ENCODE measurements at regions of chr5 and their contacts with region 1.

Region 1: GRCh38 chr5:154196955-154197652 is 6.6 kb downstream of the GALNT10 start:
- DNase-seq: no peak
- H3K4me3 ChIP-seq: no peak overlapping the region
- H3K27ac ChIP-seq: no peak overlapping the region
- H3K4me1 ChIP-seq: peaks cover 0 to 19% (median 12%) of the 10 kb centered on the region in 4 experiments; a peak in 5 of 7 replicates
- H3K27me3 ChIP-seq: peaks cover 1 to 8% (median 5%) of the 10 kb centered on the region in 4 experiments; a peak in 5 of 7 replicates
- CTCF ChIP-seq: peak in 1 of 3 experiments; percentile 27; a peak in 1 of 4 replicates
- EP300 ChIP-seq: no peak
- POLR2A ChIP-seq: no peak
- RAD21 ChIP-seq: peak; percentile 26 to 40; a peak in 3 of 4 replicates

Region 2: GRCh38 chr5:153974131-153974812 is 222.8 kb before region 1 on chr5:
- CTCF ChIA-PET with region 1: interaction called, 11 read pairs
- POLR2A ChIA-PET with region 1: no interaction called
- DNase-seq: peak in 1 of 2 experiments; percentile 60
- H3K4me3 ChIP-seq: no peak overlapping the region
- H3K27ac ChIP-seq: no peak overlapping the region
- H3K4me1 ChIP-seq: no peaks in the 10 kb centered on the region
- H3K27me3 ChIP-seq: peaks cover 0 to 2% (median 0%) of the 10 kb centered on the region in 4 experiments; a peak in 1 of 7 replicates
- CTCF ChIP-seq: peak in 2 of 3 experiments; percentile 71 to 74; a peak in 3 of 4 replicates
- EP300 ChIP-seq: no peak
- POLR2A ChIP-seq: no peak
- RAD21 ChIP-seq: peak; percentile 93 to 96

Region 3: DNA sequence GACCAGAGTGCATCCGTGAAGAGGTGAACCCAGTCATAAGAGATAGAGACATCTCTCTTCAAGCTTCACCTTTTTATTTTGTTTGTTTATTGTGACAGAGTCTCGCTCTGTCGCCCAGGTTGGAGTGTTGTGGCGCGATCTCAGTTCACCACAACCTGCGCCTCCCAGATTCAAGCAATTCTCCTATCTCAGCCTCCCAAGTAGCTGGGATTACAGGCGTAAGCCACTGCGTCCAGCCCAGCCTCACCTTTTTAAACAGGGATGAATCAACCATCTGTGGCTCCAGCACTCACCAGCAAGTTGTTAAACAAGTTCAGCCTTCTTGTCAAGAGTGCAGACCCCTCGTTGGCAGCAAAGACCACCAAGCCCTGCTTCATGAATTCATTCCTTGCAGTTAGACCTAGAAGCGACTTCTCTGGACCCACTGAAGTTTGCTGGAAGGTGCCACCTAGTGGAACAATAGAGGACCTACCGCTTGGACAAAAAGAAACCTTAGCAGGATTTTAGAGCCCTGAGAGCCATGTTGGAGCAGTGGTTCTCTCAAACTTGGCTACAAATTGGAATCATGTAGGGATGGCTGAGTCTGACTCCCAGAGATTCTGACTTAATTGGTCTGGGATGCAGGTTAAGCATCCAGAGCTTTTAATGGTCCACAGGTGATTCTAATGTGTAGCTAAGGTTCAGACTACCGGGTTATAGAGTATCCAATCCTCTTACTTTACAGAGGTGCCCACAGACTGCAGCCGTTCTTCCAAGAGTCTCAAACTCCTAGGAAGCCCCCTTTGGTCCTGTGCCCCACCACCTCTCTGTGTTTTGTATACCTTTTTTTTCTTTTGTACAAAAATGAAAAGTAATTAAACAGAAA is 17.0 kb before region 1 on chr5:
- CTCF ChIA-PET with region 1: interaction called, 25 read pairs
- POLR2A ChIA-PET with region 1: interaction called, 8 read pairs
- DNase-seq: no peak
- H3K4me3 ChIP-seq: no peak overlapping the region
- H3K27ac ChIP-seq: no peak overlapping the region
- H3K4me1 ChIP-seq: no peaks in the 10 kb centered on the region; a peak in 1 of 7 replicates
- H3K27me3 ChIP-seq: peaks cover 0 to 3% (median 0%) of the 10 kb centered on the region in 4 experiments; a peak in 1 of 7 replicates
- CTCF ChIP-seq: peak; percentile 26 to 84 (median 84)
- EP300 ChIP-seq: no peak
- POLR2A ChIP-seq: no peak
- RAD21 ChIP-seq: peak; percentile 85 to 90

Region 4: DNA sequence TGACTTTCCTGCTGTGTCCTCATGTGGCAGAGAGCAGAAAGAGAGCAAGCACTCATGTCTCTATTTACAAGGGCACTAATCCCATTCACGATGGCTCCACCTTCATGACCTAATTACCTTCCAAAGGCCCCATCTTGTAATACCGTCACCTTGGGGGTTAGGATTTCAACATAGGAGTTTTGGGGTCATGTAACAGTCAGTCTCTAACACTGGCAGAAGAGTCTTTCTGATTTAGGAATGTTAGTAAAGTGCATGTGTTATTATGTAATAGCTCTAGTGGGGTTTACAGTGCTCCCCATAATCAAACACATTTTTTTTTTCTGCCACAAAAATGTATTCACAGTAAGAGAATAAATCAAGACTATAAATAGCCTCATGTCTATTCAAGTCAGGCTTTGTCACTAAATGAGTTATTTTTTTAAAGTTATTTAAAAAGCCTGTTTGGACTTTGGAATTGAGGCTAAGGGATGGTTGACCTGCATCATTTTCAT is 12.5 kb after region 1 on chr5:
- CTCF ChIA-PET with region 1: interaction called, 25 read pairs
- POLR2A ChIA-PET with region 1: interaction called, 9 read pairs
- DNase-seq: no peak
- H3K4me3 ChIP-seq: no peak overlapping the region
- H3K27ac ChIP-seq: no peak overlapping the region
- H3K4me1 ChIP-seq: peaks cover 0 to 8% (median 3%) of the 10 kb centered on the region in 4 experiments; a peak in 4 of 7 replicates
- H3K27me3 ChIP-seq: 0 out of 7 replicates have a peak, but pooled peaks cover 0 to 5% (median 0%) of the 10 kb centered on the region in 4 experiments
- CTCF ChIP-seq: no peak
- EP300 ChIP-seq: no peak
- POLR2A ChIP-seq: no peak
- RAD21 ChIP-seq: no peak

Region 5: GRCh38 chr5:154221371-154221896 is 24.3 kb after region 1 on chr5:
- CTCF ChIA-PET with region 1: interaction called, 13 read pairs
- POLR2A ChIA-PET with region 1: no interaction called
- DNase-seq: peak in 1 of 2 experiments; percentile 41
- H3K4me3 ChIP-seq: no peak overlapping the region
- H3K27ac ChIP-seq: no peak overlapping the region
- H3K4me1 ChIP-seq: peaks cover 4 to 20% (median 9%) of the 10 kb centered on the region in 4 experiments
- H3K27me3 ChIP-seq: no peaks in the 10 kb centered on the region
- CTCF ChIP-seq: no peak
- EP300 ChIP-seq: no peak
- POLR2A ChIP-seq: no peak
- RAD21 ChIP-seq: no peak

Region 6: DNA sequence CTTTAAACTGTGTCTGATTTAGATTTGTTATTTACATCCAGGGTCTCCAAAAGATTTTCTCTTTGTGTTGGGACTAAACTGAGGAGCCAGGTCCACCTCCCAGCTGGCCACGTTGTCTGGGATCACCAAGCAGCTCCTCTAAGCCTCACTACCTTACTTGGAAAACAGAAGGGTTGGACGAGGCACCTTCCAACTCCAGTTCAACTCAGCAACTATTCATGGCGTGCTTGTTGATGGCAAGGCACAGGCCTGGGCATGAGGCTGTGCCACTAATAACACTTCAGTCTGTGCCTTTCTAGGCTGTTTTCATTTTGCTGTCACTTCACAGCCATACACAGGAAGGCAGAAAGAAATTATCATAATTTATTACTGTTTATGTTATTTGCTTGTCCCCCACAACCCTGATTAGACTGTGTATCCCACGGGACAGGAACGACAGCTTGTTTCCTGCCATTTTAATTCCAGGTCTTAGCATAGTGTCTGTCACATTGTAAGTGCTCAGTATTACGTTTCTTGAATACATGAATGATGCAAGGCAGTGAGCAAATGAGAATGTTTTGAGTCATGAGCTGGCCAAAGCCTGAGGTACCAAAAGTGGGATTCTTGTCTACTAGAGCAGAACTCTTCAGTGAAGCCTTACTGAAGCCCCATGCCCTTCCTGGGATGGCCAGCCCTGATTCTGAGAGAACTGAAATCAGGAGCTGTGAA is 119.3 kb after region 1 on chr5:
- CTCF ChIA-PET with region 1: no interaction called
- POLR2A ChIA-PET with region 1: no interaction called
- DNase-seq: peak in 1 of 2 experiments; percentile 11
- H3K4me3 ChIP-seq: no peak overlapping the region
- H3K27ac ChIP-seq: no peak overlapping the region
- H3K4me1 ChIP-seq: no peaks in the 10 kb centered on the region
- H3K27me3 ChIP-seq: no peaks in the 10 kb centered on the region
- CTCF ChIP-seq: no peak
- EP300 ChIP-seq: no peak
- POLR2A ChIP-seq: no peak
- RAD21 ChIP-seq: no peak